Body of pancreas (tissue), 4 donors: ENCODE measurements at regions of chr6 and their contacts with region 1.

Region 1: GRCh38 chr6:156776840-156777576 is at the start of gene ARID1B:
- DNase-seq: peak; percentile 82 to 88 (median 85)
- ATAC-seq: peak; percentile 68
- H3K4me3 ChIP-seq: peak within 1 kb of the TSS; percentile 65 to 92
- H3K27ac ChIP-seq: peak within 1 kb of the TSS; percentile 95 to 99 (median 98)
- H3K4me1 ChIP-seq: peaks cover 19% of the 10 kb centered on the region
- H3K27me3 ChIP-seq: no peaks in the 10 kb centered on the region
- CTCF ChIP-seq: peak in 2 of 7 experiments; percentile 1 to 2
- POLR2A ChIP-seq: peak; percentile 48 to 83 (median 81)
- total RNA-seq, gene ARID1B: 71.5 to 85.1 TPM

Region 2: DNA sequence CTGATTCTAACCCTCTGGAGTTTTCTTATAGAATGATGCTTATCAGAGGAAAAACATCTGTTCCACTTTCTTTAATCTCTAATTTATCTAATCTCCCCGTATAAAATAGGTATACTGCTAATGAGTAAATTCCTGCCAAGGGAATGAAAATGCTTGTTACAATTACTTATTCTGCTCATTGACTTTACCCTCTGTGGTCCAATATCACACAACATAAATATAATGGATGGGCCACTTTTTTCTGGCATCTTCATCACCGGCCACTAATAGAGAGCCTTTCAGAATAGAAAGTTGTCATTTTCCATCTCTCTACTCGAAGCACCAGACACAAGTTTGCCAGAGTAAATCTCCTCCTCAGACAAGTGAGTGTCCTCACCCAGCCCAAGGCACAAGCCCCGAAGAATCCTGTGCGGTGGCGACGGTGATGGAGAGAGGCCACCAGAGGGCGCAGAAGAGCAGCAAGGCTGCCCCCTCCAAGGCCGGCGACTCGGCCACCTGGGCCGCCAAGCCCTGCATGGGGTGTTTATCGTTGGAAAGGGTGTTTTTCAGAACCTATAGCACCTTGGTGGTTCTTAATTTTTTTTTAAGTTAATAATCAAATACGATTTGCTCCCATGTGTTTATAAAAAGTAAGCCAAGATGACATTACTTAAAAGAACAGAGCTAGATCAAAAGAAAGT is 212.7 kb before region 1 on chr6:
- intact Hi-C with region 1: loop called (anchors 10 kb)
- DNase-seq: peak; percentile 77 to 84 (median 82)
- ATAC-seq: peak; percentile 92
- H3K4me3 ChIP-seq: no peak overlapping the region
- H3K27ac ChIP-seq: no peak overlapping the region
- H3K4me1 ChIP-seq: peaks cover 3% of the 10 kb centered on the region
- H3K27me3 ChIP-seq: no peaks in the 10 kb centered on the region
- CTCF ChIP-seq: peak; percentile 85 to 94 (median 90)
- POLR2A ChIP-seq: no peak

Region 3: DNA sequence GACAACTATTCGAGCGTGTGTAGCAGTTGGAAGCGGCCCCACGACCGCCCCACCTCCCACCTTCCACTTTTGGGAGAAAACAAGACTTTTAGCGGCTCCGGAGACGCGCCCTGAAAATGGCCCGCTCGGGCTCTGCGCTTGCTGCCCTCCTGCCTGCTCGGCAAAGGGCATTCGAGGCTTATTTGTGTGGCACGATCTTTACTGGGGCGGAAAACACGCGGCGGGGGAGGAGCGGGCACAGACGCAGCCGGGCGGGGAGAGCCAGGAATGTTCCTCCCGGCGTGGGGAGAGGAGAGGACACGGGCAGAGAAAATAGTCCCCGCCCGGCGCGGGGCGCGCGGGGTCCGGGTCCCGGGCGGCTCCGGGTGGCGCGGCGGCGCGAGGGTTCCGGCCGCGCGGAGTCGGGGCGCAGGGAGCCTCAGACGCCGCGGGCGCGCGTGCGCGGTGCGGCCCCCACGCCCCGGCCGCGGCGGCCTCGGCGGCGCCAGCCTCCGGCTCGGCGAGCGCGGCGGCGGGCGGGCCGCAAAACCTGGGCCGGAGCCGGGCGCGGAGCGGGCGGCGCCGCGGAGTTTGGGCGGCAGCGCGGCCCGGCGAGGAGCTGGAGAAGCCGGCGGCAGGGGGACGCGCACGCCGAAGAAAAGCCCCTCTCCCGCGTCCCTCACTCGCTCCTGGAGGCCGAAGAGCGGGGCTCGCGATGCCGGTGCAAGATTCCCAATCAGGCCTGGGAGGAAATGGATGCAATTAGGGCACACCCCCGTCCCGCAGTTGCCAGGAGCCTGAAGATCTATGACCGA is 89.8 kb before region 1 on chr6:
- intact Hi-C with region 1: loop called (anchors 5 kb)
- DNase-seq: peak; percentile 91 to 93 (median 91)
- ATAC-seq: peak; percentile 91
- H3K4me3 ChIP-seq: peak overlapping the region; percentile 46 to 66
- H3K27ac ChIP-seq: peak overlapping the region; percentile 91 to 99 (median 98)
- H3K4me1 ChIP-seq: peaks cover 17% of the 10 kb centered on the region
- H3K27me3 ChIP-seq: no peaks in the 10 kb centered on the region
- CTCF ChIP-seq: peak in 1 of 7 experiments; percentile 15
- POLR2A ChIP-seq: peak; percentile 86 to 96 (median 96)